ENCODE measurements at regions of chr4 and their contacts with region 1.

Region 1: GRCh38 chr4:126533146-126533805 is 1099.5 kb upstream of the INTU start:
- DNase-seq: no peak
- ATAC-seq: no peak
- H3K4me3 ChIP-seq: no peak overlapping the region
- H3K27ac ChIP-seq: no peak overlapping the region
- H3K4me1 ChIP-seq: no peaks in the 10 kb centered on the region
- H3K27me3 ChIP-seq: no peaks in the 10 kb centered on the region
- CTCF ChIP-seq: no peak
- POLR2A ChIP-seq: no peak

Region 2: GRCh38 chr4:126627255-126627654 is 94.0 kb after region 1 on chr4:
- in situ Hi-C with region 1: loop called in 1 of 4 experiments (anchors 25 kb)
- intact Hi-C with region 1: no loop called
- DNase-seq: no peak
- ATAC-seq: no peak
- H3K4me3 ChIP-seq: no peak overlapping the region
- H3K27ac ChIP-seq: no peak overlapping the region
- H3K4me1 ChIP-seq: no peaks in the 10 kb centered on the region
- H3K27me3 ChIP-seq: no peaks in the 10 kb centered on the region
- CTCF ChIP-seq: no peak
- POLR2A ChIP-seq: no peak

Region 3: DNA sequence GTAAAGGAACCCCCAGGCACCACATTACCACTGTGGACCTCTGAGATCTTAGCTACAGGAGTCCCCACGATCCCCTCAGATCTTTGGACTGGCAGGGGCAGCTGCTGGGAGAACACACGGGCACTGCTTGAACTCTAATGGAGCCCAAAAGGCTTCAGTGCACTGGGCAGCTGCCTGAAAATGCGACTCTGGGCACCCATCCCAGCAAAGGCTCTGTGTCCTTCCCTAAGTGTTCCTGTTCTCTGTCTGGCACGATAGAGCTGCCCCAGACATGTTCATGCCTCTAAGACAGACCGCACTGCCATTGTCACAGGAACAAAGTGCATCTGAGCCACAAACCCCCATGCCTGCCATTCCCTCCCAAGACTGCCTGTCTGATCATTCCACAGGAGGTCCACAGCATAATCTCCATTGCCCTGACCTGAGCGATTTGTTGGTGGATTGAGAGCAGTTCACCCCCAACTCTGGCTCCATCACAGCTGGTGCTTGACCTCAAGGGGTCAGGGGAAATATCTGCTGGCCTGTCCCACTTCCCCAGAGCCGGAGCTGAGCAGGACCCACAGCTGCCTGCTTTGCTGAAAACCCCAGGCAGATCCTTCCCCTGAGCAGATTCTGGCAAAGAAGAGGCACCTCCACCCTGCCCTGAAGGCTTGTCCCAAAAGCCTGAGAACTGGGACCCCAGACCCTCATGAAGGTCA is 663.5 kb after region 1 on chr4:
- in situ Hi-C with region 1: no loop called
- intact Hi-C with region 1: no loop called
- DNase-seq: no peak
- ATAC-seq: no peak
- H3K4me3 ChIP-seq: no peak overlapping the region
- H3K27ac ChIP-seq: no peak overlapping the region
- H3K4me1 ChIP-seq: no peaks in the 10 kb centered on the region
- H3K27me3 ChIP-seq: no peaks in the 10 kb centered on the region
- CTCF ChIP-seq: no peak
- POLR2A ChIP-seq: no peak

Measured in gastrocnemius medialis (tissue), 4 donors.